Activated CD4-positive, alpha-beta T cell treated with anti-CD3 and anti-CD28 coated beads, Interleukin-2, amount 10 ng/mL, durations not matched to agents 24 days and 14 days (primary cell): ENCODE measurements at regions of chr6 and their contacts with region 1.

Region 1: GRCh38 chr6:29976588-29977424 is 34.5 kb downstream of the HLA-A start:
- DNase-seq: peak; percentile 88
- H3K4me3 Mint-ChIP-seq: peak overlapping the region; percentile 82
- H3K27ac Mint-ChIP-seq: peak overlapping the region; percentile 63
- H3K4me1 Mint-ChIP-seq: peaks cover 34% of the 10 kb centered on the region
- H3K27me3 Mint-ChIP-seq: peaks cover 62% of the 10 kb centered on the region

Region 2: GRCh38 chr6:29649701-29650673 is 326.8 kb before region 1 on chr6:
- intact Hi-C with region 1: no loop called
- DNase-seq: peak; percentile 99
- H3K4me3 Mint-ChIP-seq: peak overlapping the region; percentile 94
- H3K27ac Mint-ChIP-seq: peak overlapping the region; percentile 99
- H3K4me1 Mint-ChIP-seq: peaks cover 10% of the 10 kb centered on the region
- H3K27me3 Mint-ChIP-seq: peaks cover 5% of the 10 kb centered on the region

Region 3: GRCh38 chr6:29995340-29995777 is 18.6 kb after region 1 on chr6:
- intact Hi-C with region 1: no loop called
- DNase-seq: no peak
- H3K4me3 Mint-ChIP-seq: no peak overlapping the region
- H3K27ac Mint-ChIP-seq: no peak overlapping the region
- H3K4me1 Mint-ChIP-seq: peaks cover 3% of the 10 kb centered on the region
- H3K27me3 Mint-ChIP-seq: peaks cover 34% of the 10 kb centered on the region

Region 4: GRCh38 chr6:30013291-30013922 is 36.6 kb after region 1 on chr6:
- intact Hi-C with region 1: loop called (anchors 5 kb)
- DNase-seq: peak; percentile 87
- H3K4me3 Mint-ChIP-seq: no peak overlapping the region
- H3K27ac Mint-ChIP-seq: no peak overlapping the region
- H3K4me1 Mint-ChIP-seq: no peaks in the 10 kb centered on the region
- H3K27me3 Mint-ChIP-seq: peaks cover 5% of the 10 kb centered on the region